ENCODE measurements at regions of chr17 and their contacts with region 1.

Region 1: GRCh38 chr17:69390795-69391501 is 23.5 kb upstream of the MAP2K6 start:
- DNase-seq: no peak
- H3K4me3 ChIP-seq: no peak overlapping the region
- CTCF ChIP-seq: no peak

Region 2: GRCh38 chr17:69269131-69269998 is 121.6 kb before region 1 on chr17:
- CTCF ChIA-PET with region 1: no interaction called
- POLR2A ChIA-PET with region 1: no interaction called
- DNase-seq: peak; percentile 89
- H3K4me3 ChIP-seq: no peak overlapping the region
- CTCF ChIP-seq: no peak

Region 3: DNA sequence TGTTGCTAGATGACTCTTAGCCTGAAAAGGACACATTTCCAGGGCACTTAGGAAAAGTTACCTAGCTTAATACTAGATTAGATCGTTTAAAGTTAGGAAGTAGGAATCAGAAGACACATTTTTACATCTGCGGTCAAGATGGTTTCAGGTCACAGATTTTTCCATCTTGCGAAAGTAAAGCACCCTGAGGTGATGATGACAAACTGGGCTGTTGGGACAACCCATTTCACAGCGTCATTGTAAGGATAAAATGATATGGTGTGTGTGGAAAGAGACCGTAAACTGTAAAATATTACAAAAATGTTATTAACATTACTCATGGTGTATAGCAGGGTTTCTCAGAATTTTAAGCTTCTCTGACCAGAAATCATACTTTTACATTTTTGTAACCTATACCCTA is 13.4 kb after region 1 on chr17:
- CTCF ChIA-PET with region 1: interaction called, 14 read pairs
- POLR2A ChIA-PET with region 1: no interaction called
- DNase-seq: peak; percentile 17
- H3K4me3 ChIP-seq: no peak overlapping the region
- CTCF ChIP-seq: no peak

Region 4: DNA sequence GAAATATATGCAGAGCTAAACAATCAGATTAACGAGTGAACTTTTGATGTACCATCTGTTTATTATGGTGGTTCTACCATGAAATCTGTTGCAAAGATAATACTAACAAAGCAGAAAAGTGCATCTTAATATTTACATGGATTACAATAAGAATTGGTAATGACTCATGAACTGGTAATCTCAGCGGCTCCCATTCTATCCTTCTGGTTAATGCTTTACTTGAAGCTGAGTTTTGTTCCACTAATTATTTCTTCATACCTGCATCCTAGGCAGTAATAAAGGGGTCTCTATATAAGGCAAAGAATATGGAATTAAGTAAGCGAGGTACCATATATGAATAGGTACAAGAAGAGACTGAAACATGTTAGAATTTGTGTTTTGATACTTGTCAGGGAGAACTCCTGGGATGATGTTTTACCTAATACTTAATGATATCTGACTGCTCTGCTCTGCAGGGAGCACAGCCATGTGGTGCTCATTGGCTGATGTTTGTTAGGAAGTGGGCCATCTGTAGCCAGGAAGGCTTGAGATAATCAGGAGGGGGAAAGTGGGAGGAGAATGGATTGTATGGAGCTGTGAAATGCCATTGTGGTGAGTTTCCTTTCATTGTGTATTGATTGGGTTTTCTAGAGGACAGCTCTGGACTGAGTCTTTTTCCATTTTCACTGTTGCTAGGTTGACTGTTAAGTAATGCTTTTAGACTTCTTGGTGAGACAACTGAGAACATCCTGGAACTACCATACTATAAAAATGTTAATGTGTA is 76.1 kb after region 1 on chr17:
- CTCF ChIA-PET with region 1: no interaction called
- POLR2A ChIA-PET with region 1: no interaction called
- DNase-seq: no peak
- H3K4me3 ChIP-seq: no peak overlapping the region
- CTCF ChIP-seq: no peak

Measured in AG04449 (cell line).